Activated CD4-positive, alpha-beta T cell treated with anti-CD3 and anti-CD28 coated beads for 36 hours (primary cell): ENCODE measurements at regions of chr21 and their contacts with region 1.

Region 1: GRCh38 chr21:43938751-43939442 is 73.2 kb upstream of the TRAPPC10 start:
- DNase-seq: peak; percentile 95
- ATAC-seq: peak; percentile 98
- H3K4me3 Mint-ChIP-seq: peak overlapping the region; percentile 76
- H3K27ac Mint-ChIP-seq: peak overlapping the region; percentile 86
- H3K4me1 Mint-ChIP-seq: peaks cover 19% of the 10 kb centered on the region
- H3K27me3 Mint-ChIP-seq: no peaks in the 10 kb centered on the region

Region 2: GRCh38 chr21:43718872-43719747 is 219.8 kb before region 1 on chr21 and contains the start of gene PDXK:
- CTCF ChIA-PET with region 1: no interaction called
- POLR2A ChIA-PET with region 1: no interaction called
- intact Hi-C with region 1: loop called in 1 of 2 experiments (anchors 2 kb)
- DNase-seq: peak; percentile 86
- ATAC-seq: peak; percentile 82
- H3K4me3 Mint-ChIP-seq: peak within 1 kb of the TSS; percentile 82
- H3K27ac Mint-ChIP-seq: peak within 1 kb of the TSS; percentile 74
- H3K4me1 Mint-ChIP-seq: peaks cover 27% of the 10 kb centered on the region
- H3K27me3 Mint-ChIP-seq: no peaks in the 10 kb centered on the region
- total RNA-seq, gene PDXK: 96.9 to 117 TPM

Region 3: GRCh38 chr21:43893536-43894205 is 45.2 kb before region 1 on chr21:
- CTCF ChIA-PET with region 1: interaction called, 9 read pairs
- POLR2A ChIA-PET with region 1: no interaction called
- intact Hi-C with region 1: loop called (anchors 1 to 5 kb)
- DNase-seq: peak; percentile 72
- ATAC-seq: peak; percentile 95
- H3K4me3 Mint-ChIP-seq: peak overlapping the region; percentile 70
- H3K27ac Mint-ChIP-seq: peak overlapping the region; percentile 90
- H3K4me1 Mint-ChIP-seq: peaks cover 47% of the 10 kb centered on the region
- H3K27me3 Mint-ChIP-seq: no peaks in the 10 kb centered on the region

Region 4: DNA sequence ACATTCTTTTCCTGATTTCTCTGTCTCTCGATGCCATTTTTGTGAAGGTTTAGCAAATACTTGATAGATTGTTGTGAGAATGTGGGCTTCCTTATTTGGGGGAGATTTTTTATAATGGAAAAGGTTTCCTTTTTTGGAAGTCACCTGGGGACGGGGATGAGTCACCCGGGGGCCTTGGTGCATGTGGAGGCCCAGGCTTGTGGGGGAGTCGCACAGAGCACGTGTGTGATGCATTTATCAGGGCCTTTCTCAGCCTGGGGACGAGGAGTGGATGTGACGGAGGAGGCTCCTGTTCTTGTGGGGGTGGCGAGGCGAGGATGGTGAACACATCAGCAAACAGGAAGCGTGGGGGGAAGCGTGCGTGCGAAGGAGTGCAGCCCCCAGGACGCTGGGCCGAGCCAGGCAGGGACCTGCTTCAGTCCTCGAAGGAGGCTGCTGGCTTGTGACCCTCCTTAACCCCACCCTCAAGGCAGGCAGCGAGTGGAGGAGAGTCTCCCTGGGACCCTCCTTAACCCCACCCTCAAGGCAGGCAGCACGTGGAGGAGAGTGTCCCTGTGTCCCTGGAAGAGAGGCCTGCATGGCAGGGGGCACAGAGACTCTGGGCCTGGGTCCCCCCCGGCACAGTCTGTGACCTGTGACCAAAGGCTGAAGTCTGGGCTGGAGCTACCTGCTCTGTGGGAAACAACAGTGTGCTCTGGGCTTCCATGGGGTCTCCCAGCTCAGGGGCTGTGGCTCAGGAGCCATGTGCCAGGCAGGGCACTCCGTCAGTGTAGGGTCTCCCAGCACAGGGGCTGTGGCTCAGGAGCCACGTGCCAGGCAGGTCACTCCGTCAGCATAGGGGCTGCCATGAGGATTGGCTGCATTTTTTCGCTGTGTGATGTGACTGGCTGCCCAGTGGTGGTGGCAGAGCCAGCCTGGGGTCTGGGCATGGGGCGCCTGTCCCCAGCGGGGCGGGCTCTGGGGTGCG is 16.6 kb before region 1 on chr21:
- CTCF ChIA-PET with region 1: interaction called, 7 read pairs
- POLR2A ChIA-PET with region 1: no interaction called
- intact Hi-C with region 1: loop called in 1 of 2 experiments (anchors 2 kb)
- DNase-seq: peak; percentile 81
- ATAC-seq: peak; percentile 71
- H3K4me3 Mint-ChIP-seq: peak overlapping the region; percentile 49
- H3K27ac Mint-ChIP-seq: peak overlapping the region; percentile 96
- H3K4me1 Mint-ChIP-seq: peaks cover 64% of the 10 kb centered on the region
- H3K27me3 Mint-ChIP-seq: no peaks in the 10 kb centered on the region

Region 5: DNA sequence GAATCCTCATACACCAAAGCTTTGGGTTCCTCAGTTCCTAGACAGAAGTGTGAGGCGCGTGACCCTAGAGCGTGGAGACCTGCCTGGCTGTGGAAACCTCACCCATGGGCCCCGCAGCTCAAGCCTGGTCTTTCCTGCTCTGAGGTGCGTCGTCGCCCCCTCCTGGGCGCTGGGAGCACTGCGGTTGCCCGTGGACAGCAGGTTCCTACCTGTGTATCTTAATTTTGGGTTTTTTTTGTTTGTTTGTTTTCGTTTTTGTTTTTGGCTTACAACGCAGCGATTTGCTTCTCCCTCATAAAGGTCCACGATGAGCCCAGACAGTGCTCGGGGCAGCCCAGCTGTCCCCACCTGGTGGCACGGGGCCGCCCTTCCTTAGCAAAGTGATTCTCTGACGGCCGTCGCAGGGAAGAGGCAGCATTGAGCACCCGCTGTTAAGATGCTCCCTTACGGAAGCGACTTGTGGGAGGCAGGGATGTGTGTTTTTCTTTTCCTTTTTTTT is 36.6 kb after region 1 on chr21:
- CTCF ChIA-PET with region 1: interaction called, 22 read pairs
- POLR2A ChIA-PET with region 1: no interaction called
- intact Hi-C with region 1: loop called in 1 of 2 experiments (anchors 1 kb)
- DNase-seq: peak; percentile 92
- ATAC-seq: peak; percentile 94
- H3K4me3 Mint-ChIP-seq: no peak overlapping the region
- H3K27ac Mint-ChIP-seq: peak overlapping the region; percentile 86
- H3K4me1 Mint-ChIP-seq: peaks cover 9% of the 10 kb centered on the region
- H3K27me3 Mint-ChIP-seq: no peaks in the 10 kb centered on the region